PC-3 (cell line): ENCODE measurements at regions of chr14 and their contacts with region 1.

Region 1: GRCh38 chr14:35814371-35815005 is 5.4 kb upstream of the RALGAPA1 start:
- DNase-seq: peak; percentile 74
- ATAC-seq: peak; percentile 64
- H3K4me3 ChIP-seq: no peak overlapping the region
- H3K27ac ChIP-seq: no peak overlapping the region
- H3K4me1 ChIP-seq: no peaks in the 10 kb centered on the region
- H3K27me3 ChIP-seq: no peaks in the 10 kb centered on the region
- CTCF ChIP-seq: peak; percentile 80

Region 2: DNA sequence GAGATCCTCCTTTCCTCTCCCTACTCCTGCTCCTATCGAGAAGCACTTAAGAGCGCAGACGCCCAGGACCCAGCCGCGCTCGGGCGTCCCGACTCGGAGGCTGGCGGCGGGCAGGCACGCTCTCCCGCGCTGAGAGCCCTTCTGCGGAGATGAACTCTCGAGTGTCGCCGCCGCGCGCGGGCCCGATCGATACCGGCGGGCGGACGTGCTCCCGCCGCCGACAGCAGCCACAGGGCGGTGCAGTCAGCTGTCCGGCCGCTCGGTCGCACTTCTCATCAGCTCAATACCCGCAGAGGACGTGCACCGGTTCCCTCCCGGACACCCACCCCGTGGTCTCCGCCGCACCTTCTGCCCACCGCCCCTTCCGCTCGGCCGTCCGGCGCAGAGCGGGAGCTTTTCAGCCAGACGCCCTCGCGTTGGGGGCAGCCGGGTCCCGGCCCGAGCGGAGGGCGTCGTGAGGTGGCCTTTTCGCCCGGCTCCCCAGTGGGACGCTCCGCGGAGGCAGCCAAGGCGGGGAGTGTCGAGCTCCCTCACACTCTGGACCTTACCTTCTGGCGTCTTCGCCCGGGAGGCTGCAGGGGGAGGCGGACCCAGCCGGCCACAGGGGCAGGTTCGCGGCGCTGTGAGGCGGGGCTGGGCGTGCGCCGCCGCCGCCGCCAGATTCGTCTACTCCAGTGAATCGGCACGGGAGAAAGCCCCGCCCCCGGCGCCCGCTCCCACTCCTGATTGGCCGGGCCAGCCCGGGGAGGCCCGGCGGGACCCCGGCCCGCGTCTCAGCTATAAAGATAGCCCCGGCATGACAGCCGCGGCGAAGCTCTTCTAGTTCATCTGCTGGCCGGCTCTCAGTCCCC is 280.9 kb before region 1 on chr14 and contains the start of gene INSM2:
- CTCF ChIA-PET with region 1: interaction called, 5 read pairs
- POLR2A ChIA-PET with region 1: no interaction called
- intact Hi-C with region 1: loop called (anchors 10 kb)
- DNase-seq: peak; percentile 69
- ATAC-seq: peak; percentile 89
- H3K4me3 ChIP-seq: peak within 1 kb of the TSS; percentile 75
- H3K27ac ChIP-seq: no peak within 1 kb of the TSS
- H3K4me1 ChIP-seq: no peaks in the 10 kb centered on the region; the same call in 1 of the 2 replicates
- H3K27me3 ChIP-seq: peaks cover 58% of the 10 kb centered on the region
- CTCF ChIP-seq: 0 out of 2 replicates have a peak, but pooled peaks have one; percentile 8
- total RNA-seq, gene INSM2: 0.07 TPM in 1 of 2 replicates, not detected in the other

Region 3: DNA sequence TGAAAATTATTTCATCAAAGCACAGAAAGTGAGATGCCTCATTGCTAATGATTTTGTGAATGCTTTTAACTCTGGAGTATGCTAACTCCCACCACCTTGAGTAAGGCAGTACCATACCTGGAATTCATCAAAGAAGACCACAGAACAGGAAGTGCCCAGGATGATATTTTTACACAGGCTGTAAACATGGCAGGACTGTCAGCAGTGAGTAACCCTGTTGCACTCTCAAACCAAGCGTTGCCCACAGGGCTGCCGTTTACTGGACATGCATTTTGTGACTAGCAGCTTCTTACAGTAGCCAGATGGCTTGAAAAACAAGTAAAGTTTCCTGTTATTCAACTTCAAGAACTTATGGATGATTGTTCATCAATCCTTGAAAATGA is 47.8 kb before region 1 on chr14:
- CTCF ChIA-PET with region 1: no interaction called
- POLR2A ChIA-PET with region 1: no interaction called
- intact Hi-C with region 1: no loop called
- DNase-seq: no peak
- ATAC-seq: no peak
- H3K4me3 ChIP-seq: no peak overlapping the region
- H3K27ac ChIP-seq: no peak overlapping the region
- H3K4me1 ChIP-seq: no peaks in the 10 kb centered on the region
- H3K27me3 ChIP-seq: no peaks in the 10 kb centered on the region
- CTCF ChIP-seq: no peak

Region 4: DNA sequence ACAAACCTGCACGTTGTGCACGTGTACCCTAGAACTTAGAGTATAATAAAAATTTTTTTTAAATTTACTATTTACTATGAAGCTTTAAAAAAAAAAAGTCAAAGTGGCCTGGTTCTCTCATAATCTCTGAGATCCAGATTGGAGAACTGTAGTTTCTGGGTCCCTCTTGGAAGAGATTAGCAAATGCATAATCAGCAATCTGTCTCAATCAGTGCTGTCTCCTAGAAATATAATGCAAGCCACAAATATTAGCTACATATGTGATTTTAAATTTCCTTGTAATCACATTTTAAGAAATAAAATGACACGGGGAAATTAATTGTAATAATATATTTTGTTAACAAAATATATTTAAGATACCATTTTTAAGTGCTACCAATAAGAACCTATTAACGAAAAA is 37.7 kb before region 1 on chr14:
- CTCF ChIA-PET with region 1: no interaction called
- POLR2A ChIA-PET with region 1: no interaction called
- intact Hi-C with region 1: no loop called
- DNase-seq: no peak
- ATAC-seq: no peak
- H3K4me3 ChIP-seq: no peak overlapping the region
- H3K27ac ChIP-seq: no peak overlapping the region
- H3K4me1 ChIP-seq: no peaks in the 10 kb centered on the region
- H3K27me3 ChIP-seq: no peaks in the 10 kb centered on the region
- CTCF ChIP-seq: no peak

Region 5: GRCh38 chr14:35861204-35861868 is 46.8 kb after region 1 on chr14:
- CTCF ChIA-PET with region 1: no interaction called
- POLR2A ChIA-PET with region 1: no interaction called
- intact Hi-C with region 1: no loop called
- DNase-seq: no peak
- ATAC-seq: no peak
- H3K4me3 ChIP-seq: no peak overlapping the region
- H3K27ac ChIP-seq: no peak overlapping the region
- H3K4me1 ChIP-seq: no peaks in the 10 kb centered on the region
- H3K27me3 ChIP-seq: no peaks in the 10 kb centered on the region
- CTCF ChIP-seq: no peak

Region 6: DNA sequence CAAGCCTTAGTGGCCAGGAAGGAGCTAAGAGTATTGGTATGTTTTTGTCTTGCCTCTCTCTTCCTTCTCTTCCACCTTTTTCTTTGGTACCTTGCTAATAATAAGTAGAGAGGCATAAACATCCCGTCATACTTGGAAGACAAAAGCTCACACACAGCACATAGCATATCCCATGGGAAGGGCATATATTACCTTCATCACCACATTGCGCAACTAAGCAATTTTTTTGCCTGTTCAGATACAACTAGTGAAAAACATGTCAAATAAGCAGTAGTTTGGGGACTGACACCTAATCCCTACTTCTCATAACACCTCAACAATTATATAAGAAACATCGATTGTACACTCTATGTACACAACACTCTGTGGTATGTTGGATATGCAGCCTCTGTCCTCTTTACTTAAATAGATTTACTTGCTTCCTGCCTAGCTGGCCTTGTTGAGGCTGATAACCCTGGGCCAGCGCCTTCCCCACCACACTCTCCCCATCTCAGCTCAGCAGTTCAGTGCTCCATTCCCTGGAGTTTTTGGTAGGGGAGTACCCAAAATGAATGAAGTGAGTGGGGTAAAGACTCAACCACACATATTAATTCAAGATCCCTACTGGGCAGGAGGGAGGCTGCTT is 470.6 kb after region 1 on chr14:
- CTCF ChIA-PET with region 1: no interaction called
- POLR2A ChIA-PET with region 1: no interaction called
- intact Hi-C with region 1: no loop called
- DNase-seq: no peak
- ATAC-seq: no peak
- H3K4me3 ChIP-seq: no peak overlapping the region
- H3K27ac ChIP-seq: no peak overlapping the region
- H3K4me1 ChIP-seq: no peaks in the 10 kb centered on the region
- H3K27me3 ChIP-seq: peaks cover 36% of the 10 kb centered on the region
- CTCF ChIP-seq: no peak